Endothelial cell of umbilical vein (primary cell): ENCODE measurements at regions of chr15 and their contacts with region 1.

Region 1: GRCh38 chr15:56918046-56918938 is at the start of gene TCF12:
- DNase-seq: peak; percentile 94
- H3K4me3 ChIP-seq: peak within 1 kb of the TSS; percentile 87 to 98 (median 87)
- H3K27ac ChIP-seq: peak within 1 kb of the TSS; percentile 86
- H3K4me1 ChIP-seq: peaks cover 42% of the 10 kb centered on the region
- H3K27me3 ChIP-seq: no peaks in the 10 kb centered on the region
- CTCF ChIP-seq: peak; percentile 11 to 51
- POLR2A ChIP-seq: peak; percentile 45
- total RNA-seq, gene TCF12: 127 and 133 TPM in 2 replicates

Region 2: GRCh38 chr15:56732921-56733797 is 185.1 kb before region 1 on chr15 and contains the start of gene ZNF280D:
- CTCF ChIA-PET with region 1: no interaction called
- POLR2A ChIA-PET with region 1: no interaction called
- dilution Hi-C with region 1: no loop called
- intact Hi-C with region 1: loop called (anchors 2 kb)
- DNase-seq: peak; percentile 91
- H3K4me3 ChIP-seq: peak within 1 kb of the TSS; percentile 19 to 70 (median 68)
- H3K27ac ChIP-seq: peak within 1 kb of the TSS; percentile 59
- H3K4me1 ChIP-seq: peaks cover 34% of the 10 kb centered on the region
- H3K27me3 ChIP-seq: no peaks in the 10 kb centered on the region
- CTCF ChIP-seq: no peak
- POLR2A ChIP-seq: peak; percentile 72
- total RNA-seq, gene ZNF280D: 35.8 and 42.1 TPM in 2 replicates

Region 3: DNA sequence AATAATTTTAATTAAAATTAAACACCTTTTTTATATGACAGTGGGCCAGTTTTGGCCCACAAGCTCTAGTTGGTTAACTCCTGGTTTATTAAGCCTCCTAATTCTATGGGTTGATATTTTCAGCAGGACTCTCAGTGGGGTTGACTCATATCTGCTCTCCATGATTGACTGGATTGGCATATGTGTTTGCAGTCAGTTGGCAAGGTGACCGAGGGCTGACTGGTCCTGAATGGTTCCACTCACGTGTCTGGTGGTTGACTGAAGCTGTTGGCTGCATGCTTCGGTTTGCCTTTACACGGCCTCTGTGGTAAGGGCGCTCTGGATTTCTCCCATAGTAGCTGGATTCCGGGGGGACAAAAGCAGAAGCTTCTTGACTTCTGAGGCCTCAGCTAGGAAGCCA is 119.7 kb before region 1 on chr15:
- CTCF ChIA-PET with region 1: no interaction called
- POLR2A ChIA-PET with region 1: no interaction called
- dilution Hi-C with region 1: no loop called
- intact Hi-C with region 1: no loop called
- DNase-seq: no peak
- H3K4me3 ChIP-seq: no peak overlapping the region
- H3K27ac ChIP-seq: no peak overlapping the region
- H3K4me1 ChIP-seq: no peaks in the 10 kb centered on the region
- H3K27me3 ChIP-seq: peaks cover 0 to 2% of the 10 kb centered on the region in 2 experiments
- CTCF ChIP-seq: no peak
- POLR2A ChIP-seq: no peak

Region 4: GRCh38 chr15:56886932-56887781 is 31.1 kb before region 1 on chr15:
- CTCF ChIA-PET with region 1: interaction called, 4 read pairs
- POLR2A ChIA-PET with region 1: interaction called, 6 read pairs
- dilution Hi-C with region 1: no loop called
- intact Hi-C with region 1: loop called (anchors 1 kb)
- DNase-seq: peak; percentile 91
- H3K4me3 ChIP-seq: peak overlapping the region; percentile 23 to 79 (median 67)
- H3K27ac ChIP-seq: peak overlapping the region; percentile 73
- H3K4me1 ChIP-seq: peaks cover 15% of the 10 kb centered on the region
- H3K27me3 ChIP-seq: no peaks in the 10 kb centered on the region
- CTCF ChIP-seq: peak in 1 of 2 donors; percentile 4
- POLR2A ChIP-seq: peak; percentile 81

Region 5: GRCh38 chr15:57079931-57080620 is 161.8 kb after region 1 on chr15:
- CTCF ChIA-PET with region 1: no interaction called
- POLR2A ChIA-PET with region 1: no interaction called
- dilution Hi-C with region 1: no loop called
- intact Hi-C with region 1: loop called (anchors 1 kb)
- DNase-seq: no peak
- H3K4me3 ChIP-seq: no peak overlapping the region
- H3K27ac ChIP-seq: no peak overlapping the region
- H3K4me1 ChIP-seq: peaks cover 32% of the 10 kb centered on the region
- H3K27me3 ChIP-seq: no peaks in the 10 kb centered on the region
- CTCF ChIP-seq: no peak
- POLR2A ChIP-seq: no peak

Region 6: DNA sequence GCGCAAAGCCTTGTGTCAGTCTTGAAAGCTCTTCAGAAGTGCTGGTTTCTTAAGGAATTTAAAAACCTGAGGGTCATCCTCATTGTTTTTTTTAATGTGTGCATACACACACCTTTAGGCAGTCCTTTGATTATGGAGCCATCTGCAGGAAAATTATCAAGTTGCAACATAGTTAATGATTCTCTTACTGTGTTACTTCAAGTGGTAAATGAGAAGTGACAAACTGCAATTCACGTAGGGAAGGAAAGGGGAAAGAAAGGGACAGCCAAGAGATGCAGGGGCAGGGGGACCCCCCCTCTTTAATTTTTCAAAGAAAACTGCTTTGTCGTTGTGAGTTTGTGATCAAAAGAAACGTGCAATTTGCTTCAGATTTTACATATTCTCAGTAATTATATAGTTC is 295.6 kb after region 1 on chr15:
- CTCF ChIA-PET with region 1: no interaction called
- POLR2A ChIA-PET with region 1: no interaction called
- dilution Hi-C with region 1: no loop called
- intact Hi-C with region 1: loop called (anchors 1 kb)
- DNase-seq: peak; percentile 76
- H3K4me3 ChIP-seq: no peak overlapping the region
- H3K27ac ChIP-seq: no peak overlapping the region
- H3K4me1 ChIP-seq: peaks cover 17% of the 10 kb centered on the region
- H3K27me3 ChIP-seq: no peaks in the 10 kb centered on the region
- CTCF ChIP-seq: peak; percentile 18 to 24
- POLR2A ChIP-seq: no peak